Activated CD4-positive, alpha-beta memory T cell treated with anti-CD3 and anti-CD28 coated beads for 36 hours (primary cell): ENCODE measurements at regions of chr17 and their contacts with region 1.

Region 1: GRCh38 chr17:46044286-46044928 is 45.4 kb downstream of the STH start:
- DNase-seq: peak; percentile 62
- H3K4me3 Mint-ChIP-seq: no peak overlapping the region
- H3K27ac Mint-ChIP-seq: no peak overlapping the region
- H3K4me1 Mint-ChIP-seq: peaks cover 18% of the 10 kb centered on the region
- H3K27me3 Mint-ChIP-seq: no peaks in the 10 kb centered on the region

Region 2: DNA sequence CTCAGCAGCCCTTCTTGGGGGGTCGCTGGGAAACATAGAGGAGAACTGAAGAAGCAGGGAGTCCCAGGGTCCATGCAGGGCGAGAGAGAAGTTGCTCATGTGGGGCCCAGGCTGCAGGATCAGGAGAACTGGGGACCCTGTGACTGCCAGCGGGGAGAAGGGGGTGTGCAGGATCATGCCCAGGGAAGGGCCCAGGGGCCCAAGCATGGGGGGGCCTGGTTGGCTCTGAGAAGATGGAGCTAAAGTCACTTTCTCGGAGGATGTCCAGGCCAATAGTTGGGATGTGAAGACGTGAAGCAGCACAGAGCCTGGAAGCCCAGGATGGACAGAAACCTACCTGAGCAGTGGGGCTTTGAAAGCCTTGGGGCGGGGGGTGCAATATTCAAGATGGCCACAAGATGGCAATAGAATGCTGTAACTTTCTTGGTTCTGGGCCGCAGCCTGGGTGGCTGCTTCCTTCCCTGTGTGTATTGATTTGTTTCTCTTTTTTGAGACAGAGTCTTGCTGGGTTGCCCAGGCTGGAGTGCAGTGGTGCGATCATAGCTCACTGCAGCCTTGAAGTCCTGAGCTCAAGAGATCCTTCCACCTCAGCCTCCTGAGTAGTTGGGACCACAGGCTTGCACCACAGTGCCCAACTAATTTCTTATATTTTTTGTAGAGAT is 42.0 kb before region 1 on chr17:
- CTCF ChIA-PET with region 1: interaction called, 22 read pairs
- POLR2A ChIA-PET with region 1: no interaction called
- intact Hi-C with region 1: no loop called
- DNase-seq: peak; percentile 82
- H3K4me3 Mint-ChIP-seq: no peak overlapping the region
- H3K27ac Mint-ChIP-seq: no peak overlapping the region
- H3K4me1 Mint-ChIP-seq: no peaks in the 10 kb centered on the region
- H3K27me3 Mint-ChIP-seq: no peaks in the 10 kb centered on the region

Region 3: DNA sequence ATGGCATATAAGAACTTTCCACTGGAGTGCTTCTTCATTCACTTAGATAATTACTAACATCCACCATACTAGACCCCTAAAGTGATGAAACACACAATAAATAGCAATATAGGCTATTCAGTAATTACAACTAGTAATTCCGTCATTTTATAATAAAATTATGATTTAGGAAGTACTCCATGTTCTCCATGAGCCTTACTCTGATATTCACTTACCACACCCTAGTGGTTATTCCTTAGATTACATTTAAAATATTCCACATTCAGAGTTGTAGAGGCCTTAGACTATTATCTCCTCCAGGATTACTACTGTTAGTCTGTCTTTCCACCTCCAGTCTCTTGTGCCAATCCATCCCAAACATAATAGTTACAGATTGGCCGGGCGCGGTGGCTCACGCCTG is 17.0 kb after region 1 on chr17:
- CTCF ChIA-PET with region 1: interaction called, 28 read pairs
- POLR2A ChIA-PET with region 1: no interaction called
- intact Hi-C with region 1: no loop called
- DNase-seq: no peak
- H3K4me3 Mint-ChIP-seq: no peak overlapping the region
- H3K27ac Mint-ChIP-seq: no peak overlapping the region
- H3K4me1 Mint-ChIP-seq: peaks cover 32% of the 10 kb centered on the region
- H3K27me3 Mint-ChIP-seq: no peaks in the 10 kb centered on the region

Region 4: DNA sequence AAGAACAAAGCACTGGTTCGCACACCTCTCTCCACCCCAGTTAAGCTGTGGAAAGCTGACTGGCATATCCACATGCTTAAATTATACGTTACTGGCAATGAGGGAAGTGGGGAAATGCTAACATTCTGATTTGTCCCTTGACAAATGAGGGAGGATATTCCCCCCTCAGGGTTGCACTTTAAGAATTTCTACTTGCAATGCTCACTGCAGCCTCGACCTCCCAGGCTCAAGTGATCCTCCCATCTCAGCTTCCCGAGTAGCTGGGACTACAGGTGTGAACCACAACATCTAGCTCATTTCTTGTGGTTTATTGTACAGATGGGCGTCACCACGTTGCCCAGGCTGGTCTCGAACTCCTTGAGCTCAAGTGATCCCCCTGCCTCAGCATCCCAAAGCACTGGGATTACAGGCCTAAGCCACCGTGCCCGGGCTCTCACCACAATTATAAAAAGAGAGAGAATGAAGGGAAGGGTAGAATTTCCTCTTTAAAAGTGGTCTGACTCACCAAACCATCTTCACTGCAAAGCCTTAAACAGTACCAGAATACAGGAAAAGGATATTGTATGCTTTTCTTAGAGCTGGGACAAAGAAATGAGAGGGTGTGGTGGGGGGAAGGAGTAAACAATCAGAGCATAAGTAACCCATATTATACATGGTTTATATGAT is 109.9 kb after region 1 on chr17:
- CTCF ChIA-PET with region 1: interaction called, 12 read pairs
- POLR2A ChIA-PET with region 1: no interaction called
- intact Hi-C with region 1: no loop called
- DNase-seq: peak; percentile 65
- H3K4me3 Mint-ChIP-seq: no peak overlapping the region
- H3K27ac Mint-ChIP-seq: peak overlapping the region; percentile 71
- H3K4me1 Mint-ChIP-seq: peaks cover 84% of the 10 kb centered on the region
- H3K27me3 Mint-ChIP-seq: no peaks in the 10 kb centered on the region

Region 5: DNA sequence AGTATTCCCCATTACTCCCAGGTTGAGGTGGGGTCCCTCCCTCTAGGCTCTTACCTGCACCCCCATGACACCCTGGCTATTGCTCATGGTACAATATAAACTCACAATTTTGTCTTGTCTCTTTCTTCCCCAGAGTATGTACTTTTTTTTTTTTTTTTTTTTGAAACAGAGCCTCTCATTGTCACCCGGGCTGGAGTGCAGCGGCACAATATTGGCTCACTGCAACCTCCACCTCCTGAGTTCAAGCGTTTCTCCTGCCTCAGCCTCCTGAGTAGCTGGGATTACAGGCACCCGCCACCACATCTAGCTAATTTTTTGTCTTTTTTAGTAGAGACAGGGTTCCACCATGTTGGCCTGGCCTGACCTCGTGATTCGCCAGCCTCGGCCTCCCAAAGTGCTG is 140.3 kb after region 1 on chr17:
- CTCF ChIA-PET with region 1: interaction called, 55 read pairs
- POLR2A ChIA-PET with region 1: no interaction called
- intact Hi-C with region 1: no loop called
- DNase-seq: no peak
- H3K4me3 Mint-ChIP-seq: no peak overlapping the region
- H3K27ac Mint-ChIP-seq: no peak overlapping the region
- H3K4me1 Mint-ChIP-seq: peaks cover 90% of the 10 kb centered on the region
- H3K27me3 Mint-ChIP-seq: no peaks in the 10 kb centered on the region

Region 6: GRCh38 chr17:46199379-46199778 is 155.0 kb after region 1 on chr17:
- CTCF ChIA-PET with region 1: interaction called, 23 read pairs
- POLR2A ChIA-PET with region 1: no interaction called
- intact Hi-C with region 1: no loop called
- DNase-seq: no peak
- H3K4me3 Mint-ChIP-seq: no peak overlapping the region
- H3K27ac Mint-ChIP-seq: no peak overlapping the region
- H3K4me1 Mint-ChIP-seq: peaks cover 54% of the 10 kb centered on the region
- H3K27me3 Mint-ChIP-seq: no peaks in the 10 kb centered on the region

Region 7: DNA sequence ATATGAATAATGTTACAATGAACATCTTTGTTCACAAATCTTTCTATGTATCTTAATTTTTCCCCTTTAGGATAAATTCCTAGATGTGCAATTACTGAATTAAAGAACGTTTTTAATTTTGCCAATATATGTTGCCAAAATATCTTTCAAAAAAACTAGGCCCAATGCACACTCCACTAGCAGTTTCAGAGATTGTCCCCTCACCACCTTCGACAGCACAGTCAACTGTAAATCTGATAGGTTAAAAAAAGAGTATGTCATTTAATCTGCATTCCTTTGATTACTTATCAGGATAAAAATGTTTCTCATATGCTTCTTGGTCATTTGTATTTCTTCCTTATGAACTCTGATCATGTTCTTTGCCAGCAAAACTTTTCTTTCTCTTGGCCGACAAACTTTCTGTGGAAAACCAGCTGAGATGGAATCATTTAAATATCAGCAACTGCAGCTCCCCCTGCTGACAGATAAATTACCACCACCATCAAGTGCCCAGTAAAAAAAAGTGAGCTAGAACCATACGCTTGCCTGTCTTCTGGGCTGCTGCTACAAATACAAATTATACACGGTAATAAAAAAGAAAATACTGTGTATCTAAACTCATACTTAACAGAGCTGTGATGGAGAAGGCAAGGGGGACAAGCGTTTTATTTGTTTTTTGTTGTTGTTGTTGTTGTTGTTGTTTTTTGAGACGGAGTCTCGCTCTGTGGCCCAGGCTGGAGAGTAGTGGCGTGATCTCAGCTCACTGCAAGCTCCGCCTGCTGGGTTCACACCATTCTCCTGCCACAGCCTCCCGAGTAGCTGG is 168.4 kb after region 1 on chr17:
- CTCF ChIA-PET with region 1: interaction called, 70 read pairs
- POLR2A ChIA-PET with region 1: no interaction called
- intact Hi-C with region 1: no loop called
- DNase-seq: peak; percentile 67
- H3K4me3 Mint-ChIP-seq: no peak overlapping the region
- H3K27ac Mint-ChIP-seq: no peak overlapping the region
- H3K4me1 Mint-ChIP-seq: peaks cover 21% of the 10 kb centered on the region
- H3K27me3 Mint-ChIP-seq: no peaks in the 10 kb centered on the region